ENCODE measurements at regions of chr6 and their contacts with region 1.

Region 1: GRCh38 chr6:90458353-90459224 is 128.3 kb downstream of the MAP3K7 start:
- DNase-seq: peak; percentile 93
- ATAC-seq: peak; percentile 89
- H3K4me3 Mint-ChIP-seq: peak overlapping the region; percentile 63
- H3K27ac Mint-ChIP-seq: peak overlapping the region; percentile 99
- H3K4me1 Mint-ChIP-seq: peaks cover 92% of the 10 kb centered on the region
- H3K27me3 Mint-ChIP-seq: no peaks in the 10 kb centered on the region

Region 2: DNA sequence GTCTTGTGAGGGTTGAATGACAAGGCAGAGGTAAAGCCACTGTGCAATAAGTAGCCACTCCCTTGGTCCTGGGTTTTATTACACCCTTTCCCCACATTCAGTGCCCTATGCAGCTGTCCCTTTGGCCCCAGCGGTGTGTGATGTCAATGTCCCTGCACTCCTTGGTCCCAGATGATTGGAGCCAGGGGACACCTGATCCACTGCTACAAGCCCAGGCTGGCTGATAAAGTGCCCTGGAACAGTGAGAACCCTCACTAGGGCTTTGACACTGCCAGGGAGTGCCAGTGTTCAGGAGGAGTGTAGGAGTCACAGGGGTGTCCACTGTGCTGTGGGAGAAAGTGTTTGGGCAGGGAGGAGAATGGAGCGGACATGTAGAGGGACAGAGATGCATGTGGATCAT is 1271.8 kb before region 1 on chr6:
- CTCF ChIA-PET with region 1: no interaction called
- POLR2A ChIA-PET with region 1: no interaction called
- intact Hi-C with region 1: no loop called
- DNase-seq: no peak
- ATAC-seq: no peak
- H3K4me3 Mint-ChIP-seq: no peak overlapping the region
- H3K27ac Mint-ChIP-seq: no peak overlapping the region
- H3K4me1 Mint-ChIP-seq: no peaks in the 10 kb centered on the region
- H3K27me3 Mint-ChIP-seq: peaks cover 6% of the 10 kb centered on the region

Region 3: GRCh38 chr6:90251295-90251992 is 207.1 kb before region 1 on chr6:
- CTCF ChIA-PET with region 1: interaction called, 5 read pairs
- POLR2A ChIA-PET with region 1: interaction called, 5 read pairs
- intact Hi-C with region 1: loop called (anchors 1 to 2 kb)
- DNase-seq: no peak
- ATAC-seq: peak; percentile 72
- H3K4me3 Mint-ChIP-seq: peak overlapping the region; percentile 26
- H3K27ac Mint-ChIP-seq: peak overlapping the region; percentile 97
- H3K4me1 Mint-ChIP-seq: peaks cover 89% of the 10 kb centered on the region
- H3K27me3 Mint-ChIP-seq: no peaks in the 10 kb centered on the region

Region 4: DNA sequence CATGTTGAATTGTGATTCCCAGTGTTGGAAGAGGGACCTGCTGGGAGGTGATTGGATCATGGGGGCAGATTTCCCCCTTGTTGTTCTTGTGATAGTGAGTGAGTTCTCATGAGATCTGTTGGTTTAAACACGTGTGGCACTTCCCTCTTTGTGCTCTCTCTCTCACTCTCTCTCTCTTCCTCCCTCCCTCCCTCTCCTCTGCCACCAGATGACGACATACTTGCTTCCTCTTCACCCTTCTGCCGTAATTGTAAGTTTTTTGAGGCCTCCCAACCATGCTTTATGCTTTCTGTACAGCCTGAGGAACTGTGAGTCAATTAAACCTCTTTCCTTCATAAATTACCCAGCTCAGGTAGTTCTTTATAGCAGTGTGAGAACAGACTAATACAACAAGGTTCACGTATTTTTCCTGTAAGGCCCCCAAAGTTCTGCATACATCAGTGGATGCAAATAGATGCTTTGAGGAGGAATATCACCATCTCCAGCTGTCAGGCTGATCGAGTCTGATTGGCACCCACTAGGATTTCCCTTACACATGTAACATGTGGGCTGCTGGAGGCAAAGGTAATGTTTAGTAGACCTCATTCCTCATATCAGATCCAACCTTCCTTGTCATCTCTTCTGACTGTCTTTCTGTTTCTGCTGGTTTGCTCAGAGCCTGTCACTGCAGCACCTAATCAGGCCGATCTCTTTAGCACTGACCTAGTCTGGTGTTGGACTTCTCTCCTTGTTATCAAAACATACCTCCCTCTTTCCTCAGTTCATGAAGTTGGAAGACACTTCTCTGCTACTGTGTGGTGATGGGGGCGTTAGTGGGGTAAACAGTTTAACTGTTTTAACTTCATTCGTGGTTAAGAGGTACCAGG is 107.7 kb before region 1 on chr6:
- CTCF ChIA-PET with region 1: no interaction called
- POLR2A ChIA-PET with region 1: interaction called, 4 read pairs
- intact Hi-C with region 1: loop called in 1 of 2 experiments (anchors 1 kb)
- DNase-seq: peak; percentile 60
- ATAC-seq: peak; percentile 65
- H3K4me3 Mint-ChIP-seq: peak overlapping the region; percentile 44
- H3K27ac Mint-ChIP-seq: peak overlapping the region; percentile 91
- H3K4me1 Mint-ChIP-seq: peaks cover 54% of the 10 kb centered on the region
- H3K27me3 Mint-ChIP-seq: no peaks in the 10 kb centered on the region

Region 5: DNA sequence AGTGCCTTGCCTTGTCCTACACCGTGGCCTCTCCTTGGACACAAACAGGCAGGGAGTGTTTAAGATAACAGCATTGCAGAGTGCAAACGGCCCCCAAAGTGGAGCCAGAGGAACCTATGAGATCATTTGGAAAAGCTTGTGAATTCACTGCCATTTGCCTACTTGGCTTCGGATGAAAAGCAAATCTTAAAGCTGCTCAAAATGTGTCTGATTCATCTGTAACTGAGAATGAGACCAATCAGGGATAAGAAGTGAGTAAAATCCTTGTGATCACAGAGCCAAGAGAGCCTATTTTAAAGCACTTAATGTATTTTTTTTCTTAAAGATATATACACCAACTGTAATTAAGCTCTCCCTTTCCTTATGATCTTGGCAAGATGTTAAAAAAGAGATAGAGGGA is 96.3 kb before region 1 on chr6:
- CTCF ChIA-PET with region 1: no interaction called
- POLR2A ChIA-PET with region 1: no interaction called
- intact Hi-C with region 1: no loop called
- DNase-seq: no peak
- ATAC-seq: no peak
- H3K4me3 Mint-ChIP-seq: no peak overlapping the region
- H3K27ac Mint-ChIP-seq: no peak overlapping the region
- H3K4me1 Mint-ChIP-seq: peaks cover 2% of the 10 kb centered on the region
- H3K27me3 Mint-ChIP-seq: no peaks in the 10 kb centered on the region

Region 6: DNA sequence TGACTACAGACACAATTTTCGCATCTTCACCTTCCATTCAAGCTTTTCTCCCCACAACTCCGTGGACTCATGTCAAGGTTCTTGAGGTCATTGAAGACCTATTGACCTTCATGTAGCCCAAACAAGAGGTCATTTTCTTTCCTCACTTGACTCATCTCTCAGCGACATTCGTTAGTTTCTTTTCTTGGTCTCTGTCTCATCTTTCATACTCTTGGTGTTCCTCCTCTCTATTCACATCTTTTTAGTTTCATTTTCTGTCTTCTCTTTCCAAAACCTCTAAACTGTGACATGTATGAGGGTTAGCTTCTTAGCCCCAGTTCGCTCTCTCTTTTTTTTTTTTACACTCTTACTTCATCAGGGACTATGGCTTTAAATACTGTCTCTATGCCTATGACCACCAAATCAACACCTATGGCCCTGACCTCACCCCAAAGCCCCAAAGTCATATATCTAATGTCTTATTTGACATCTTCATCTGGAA is 33.4 kb before region 1 on chr6:
- CTCF ChIA-PET with region 1: interaction called, 7 read pairs
- POLR2A ChIA-PET with region 1: interaction called, 16 read pairs
- intact Hi-C with region 1: loop called (anchors 1 kb)
- DNase-seq: peak; percentile 34
- ATAC-seq: peak; percentile 93
- H3K4me3 Mint-ChIP-seq: peak overlapping the region; percentile 49
- H3K27ac Mint-ChIP-seq: peak overlapping the region; percentile 94
- H3K4me1 Mint-ChIP-seq: peaks cover 34% of the 10 kb centered on the region
- H3K27me3 Mint-ChIP-seq: no peaks in the 10 kb centered on the region

Region 7: DNA sequence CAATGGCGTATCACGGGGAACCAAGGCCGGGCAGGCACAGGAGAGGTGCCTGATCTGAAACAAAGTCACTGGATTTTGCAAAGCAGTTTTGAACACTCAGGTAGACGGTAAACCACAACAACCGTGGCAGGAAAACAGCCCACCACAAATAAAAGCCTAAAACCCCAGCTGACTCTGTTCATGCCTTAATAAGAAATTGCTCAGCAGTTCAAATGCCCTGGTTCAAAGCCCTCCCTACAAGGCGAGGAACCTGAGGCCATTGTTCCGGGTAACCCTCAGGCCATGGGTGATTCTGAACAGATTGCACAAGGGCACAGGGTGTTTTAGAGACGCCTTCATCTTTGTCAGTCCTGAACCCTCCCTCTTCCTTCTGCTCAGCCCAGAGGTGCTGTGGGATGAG is 14.2 kb after region 1 on chr6:
- CTCF ChIA-PET with region 1: interaction called, 112 read pairs
- POLR2A ChIA-PET with region 1: interaction called, 11 read pairs
- intact Hi-C with region 1: loop called (anchors 1 kb)
- DNase-seq: peak; percentile 51
- ATAC-seq: peak; percentile 9
- H3K4me3 Mint-ChIP-seq: peak overlapping the region; percentile 58
- H3K27ac Mint-ChIP-seq: peak overlapping the region; percentile 77
- H3K4me1 Mint-ChIP-seq: peaks cover 99% of the 10 kb centered on the region
- H3K27me3 Mint-ChIP-seq: peaks cover 2% of the 10 kb centered on the region